Right cardiac atrium (tissue), 5 donors: ENCODE measurements at regions of chr2 and their contacts with region 1.

Region 1: GRCh38 chr2:219294356-219295351 is 14.5 kb downstream of the PTPRN start:
- DNase-seq: peak; percentile 86 to 95 (median 95)
- ATAC-seq: peak; percentile 89 to 90
- H3K4me3 ChIP-seq: peak overlapping the region; percentile 63
- H3K27ac ChIP-seq: peak overlapping the region; percentile 26
- H3K4me1 ChIP-seq: peaks cover 2% of the 10 kb centered on the region
- H3K27me3 ChIP-seq: no peaks in the 10 kb centered on the region

Region 2: DNA sequence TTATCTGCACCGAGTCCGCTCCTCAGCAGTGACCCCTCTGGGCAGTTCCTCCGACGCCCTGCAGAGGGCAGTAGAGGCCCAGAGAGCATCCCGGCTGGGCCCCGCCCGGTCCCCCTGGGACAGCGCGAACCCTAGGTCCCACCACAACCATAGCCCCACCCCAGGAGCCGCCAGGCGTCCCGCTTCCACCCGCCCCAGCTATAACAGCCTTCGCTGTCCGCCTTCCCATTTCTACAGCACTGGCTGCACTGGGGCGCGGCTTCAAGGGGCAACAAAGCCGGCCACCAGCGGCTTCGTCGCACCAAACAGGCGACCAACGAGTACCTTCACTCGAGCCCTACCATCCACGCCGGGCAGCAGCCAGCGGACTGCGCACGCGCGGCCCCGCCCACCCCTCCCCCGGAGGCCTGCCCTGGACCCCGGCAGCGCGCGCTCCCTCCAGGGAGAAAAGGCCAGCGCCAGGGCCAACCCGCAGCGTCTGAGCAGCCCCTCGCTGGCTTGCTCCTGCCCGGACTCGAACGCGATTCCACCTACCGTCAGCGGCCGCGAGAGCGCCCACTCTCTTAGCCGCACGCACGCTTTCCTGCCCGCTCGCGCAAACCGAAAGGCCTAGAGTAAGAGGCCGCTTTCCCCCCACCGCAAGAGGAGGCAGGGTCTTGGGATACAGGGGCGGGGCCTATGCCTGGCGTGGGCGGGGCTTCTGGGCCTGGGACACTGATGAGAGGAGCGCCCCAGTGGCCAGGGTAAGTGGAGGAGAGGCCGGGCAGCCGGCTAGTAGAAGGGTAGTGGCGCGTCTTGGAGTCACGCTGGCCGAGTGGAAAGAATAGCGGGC is 134.3 kb before region 1 on chr2 and contains the start of gene NHEJ1:
- intact Hi-C with region 1: loop called (anchors 2 to 10 kb)
- DNase-seq: peak; percentile 97 to 99 (median 99)
- ATAC-seq: peak; percentile 98 to 99
- H3K4me3 ChIP-seq: peak within 1 kb of the TSS; percentile 61
- H3K27ac ChIP-seq: peak within 1 kb of the TSS; percentile 98
- H3K4me1 ChIP-seq: peaks cover 3% of the 10 kb centered on the region
- H3K27me3 ChIP-seq: no peaks in the 10 kb centered on the region
- total RNA-seq, gene NHEJ1: 5.4 to 9.4 (median 9.2) TPM

Region 3: DNA sequence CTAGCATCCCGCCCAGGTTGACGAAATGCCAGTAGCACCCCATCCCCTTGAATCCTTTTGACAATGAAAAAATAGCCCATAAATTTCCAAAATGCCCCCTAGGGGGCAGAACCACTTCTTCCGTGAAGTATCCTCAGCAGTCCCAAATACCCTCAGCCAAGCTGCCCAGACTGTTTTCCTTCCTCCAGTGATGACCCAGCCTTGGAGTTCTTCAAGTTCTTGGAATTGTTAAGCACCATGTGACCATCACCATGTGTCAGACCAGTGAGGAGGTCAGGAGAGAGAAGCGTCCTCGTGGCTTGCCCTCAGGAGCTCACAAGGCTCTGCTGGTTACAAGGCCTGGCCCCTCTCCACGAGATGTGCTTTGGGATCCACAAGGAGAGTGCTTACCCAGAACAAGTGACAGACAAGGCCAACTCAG is 123.4 kb before region 1 on chr2:
- intact Hi-C with region 1: loop called in 2 of 4 experiments (anchors 5 to 10 kb)
- DNase-seq: peak in 2 of 3 donors; percentile 43 to 75
- ATAC-seq: peak; percentile 69 to 75
- H3K4me3 ChIP-seq: no peak overlapping the region
- H3K27ac ChIP-seq: peak overlapping the region; percentile 31
- H3K4me1 ChIP-seq: peaks cover 3% of the 10 kb centered on the region
- H3K27me3 ChIP-seq: no peaks in the 10 kb centered on the region

Region 4: GRCh38 chr2:219245148-219245898 is 49.3 kb before region 1 on chr2 and contains the starts of genes GLB1L and STK16:
- intact Hi-C with region 1: loop called in 1 of 4 experiments (anchors 10 kb)
- DNase-seq: peak; percentile 96 to 98 (median 98)
- ATAC-seq: peak; percentile 93 to 96
- H3K4me3 ChIP-seq: peak within 1 kb of the TSS; percentile 48
- H3K27ac ChIP-seq: peak within 1 kb of the TSS; percentile 74
- H3K4me1 ChIP-seq: peaks cover 14% of the 10 kb centered on the region
- H3K27me3 ChIP-seq: no peaks in the 10 kb centered on the region
- total RNA-seq, gene GLB1L: 2.7 to 3.8 (median 3.3) TPM
- total RNA-seq, gene STK16: 17.5 to 19.7 (median 19.3) TPM